OCI-LY7 (cell line): ENCODE measurements at regions of chr3 and their contacts with region 1.

Region 1: GRCh38 chr3:181700168-181701087 is 11.3 kb upstream of the SOX2 start:
- DNase-seq: peak; percentile 82
- H3K4me3 ChIP-seq: peak overlapping the region; percentile 55
- H3K27ac ChIP-seq: no peak overlapping the region
- H3K4me1 ChIP-seq: peaks cover 29% of the 10 kb centered on the region
- CTCF ChIP-seq: peak; percentile 97

Region 2: GRCh38 chr3:181103605-181104004 is 596.8 kb before region 1 on chr3:
- CTCF ChIA-PET with region 1: no interaction called
- POLR2A ChIA-PET with region 1: no interaction called
- intact Hi-C with region 1: loop called (anchors 5 kb)
- DNase-seq: peak; percentile 67
- H3K4me3 ChIP-seq: no peak overlapping the region
- H3K27ac ChIP-seq: no peak overlapping the region
- H3K4me1 ChIP-seq: no peaks in the 10 kb centered on the region
- CTCF ChIP-seq: peak; percentile 78

Region 3: DNA sequence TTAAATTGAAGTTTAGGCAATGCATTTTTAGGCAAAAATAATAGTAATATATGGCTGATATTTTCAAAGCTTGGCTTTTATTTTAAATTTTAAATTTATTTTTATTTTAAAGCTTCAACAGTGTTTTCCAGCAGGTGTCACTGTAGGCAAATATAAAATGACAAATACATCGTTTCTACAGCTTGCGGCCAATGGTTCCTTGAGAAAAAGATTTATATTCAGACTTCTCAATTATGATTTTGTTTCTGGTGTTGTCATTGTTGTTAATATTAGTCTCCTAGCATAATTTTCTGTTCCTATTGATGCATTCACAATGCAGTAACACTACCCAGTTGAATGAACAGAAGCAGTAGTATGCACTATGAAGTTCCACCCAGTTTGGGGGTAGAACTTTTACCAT is 490.2 kb before region 1 on chr3:
- CTCF ChIA-PET with region 1: no interaction called
- POLR2A ChIA-PET with region 1: no interaction called
- intact Hi-C with region 1: loop called (anchors 2 kb)
- DNase-seq: peak; percentile 31
- H3K4me3 ChIP-seq: no peak overlapping the region
- H3K27ac ChIP-seq: no peak overlapping the region
- H3K4me1 ChIP-seq: no peaks in the 10 kb centered on the region
- CTCF ChIP-seq: peak; percentile 76

Region 4: GRCh38 chr3:181326637-181327223 is 373.7 kb before region 1 on chr3:
- CTCF ChIA-PET with region 1: interaction called, 14 read pairs
- POLR2A ChIA-PET with region 1: no interaction called
- intact Hi-C with region 1: loop called (anchors 1 kb)
- DNase-seq: peak; percentile 57
- H3K4me3 ChIP-seq: no peak overlapping the region
- H3K27ac ChIP-seq: no peak overlapping the region
- H3K4me1 ChIP-seq: no peaks in the 10 kb centered on the region
- CTCF ChIP-seq: peak; percentile 94

Region 5: GRCh38 chr3:181486141-181486885 is 214.1 kb before region 1 on chr3:
- CTCF ChIA-PET with region 1: interaction called, 3 read pairs
- POLR2A ChIA-PET with region 1: interaction called, 3 read pairs
- intact Hi-C with region 1: loop called (anchors 5 kb)
- DNase-seq: peak; percentile 7
- H3K4me3 ChIP-seq: no peak overlapping the region
- H3K27ac ChIP-seq: peak overlapping the region; percentile 89
- H3K4me1 ChIP-seq: peaks cover 61% of the 10 kb centered on the region
- CTCF ChIP-seq: no peak

Region 6: GRCh38 chr3:181683563-181683962 is 16.9 kb before region 1 on chr3:
- CTCF ChIA-PET with region 1: no interaction called
- POLR2A ChIA-PET with region 1: no interaction called
- intact Hi-C with region 1: no loop called
- DNase-seq: no peak
- H3K4me3 ChIP-seq: no peak overlapping the region
- H3K27ac ChIP-seq: no peak overlapping the region
- H3K4me1 ChIP-seq: no peaks in the 10 kb centered on the region
- CTCF ChIP-seq: no peak

Region 7: GRCh38 chr3:181790561-181790960 is 90.1 kb after region 1 on chr3:
- CTCF ChIA-PET with region 1: no interaction called
- POLR2A ChIA-PET with region 1: no interaction called
- intact Hi-C with region 1: no loop called
- DNase-seq: no peak
- H3K4me3 ChIP-seq: no peak overlapping the region
- H3K27ac ChIP-seq: no peak overlapping the region
- H3K4me1 ChIP-seq: peaks cover 24% of the 10 kb centered on the region
- CTCF ChIP-seq: no peak

Region 8: DNA sequence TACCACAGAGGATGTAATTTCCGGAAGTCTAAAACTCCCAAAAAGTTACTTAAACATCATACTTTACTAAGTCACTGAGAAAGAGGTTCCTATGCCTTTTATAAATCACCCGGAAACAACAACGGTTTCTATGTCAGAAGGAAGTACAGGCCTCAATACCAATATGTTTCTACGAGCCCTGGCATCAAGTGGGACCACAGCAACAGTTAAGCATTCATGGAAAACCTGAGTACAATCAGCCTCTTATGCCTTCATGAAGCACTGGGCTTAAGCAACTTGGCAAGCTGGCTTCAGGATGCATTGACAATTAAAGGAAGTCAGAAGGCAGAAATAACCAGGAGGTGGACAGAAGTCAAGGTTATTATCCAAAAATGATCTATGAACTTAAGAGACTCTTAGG is 1533.5 kb after region 1 on chr3:
- CTCF ChIA-PET with region 1: no interaction called
- POLR2A ChIA-PET with region 1: no interaction called
- intact Hi-C with region 1: no loop called
- DNase-seq: no peak
- H3K4me3 ChIP-seq: no peak overlapping the region
- H3K27ac ChIP-seq: no peak overlapping the region
- H3K4me1 ChIP-seq: no peaks in the 10 kb centered on the region
- CTCF ChIP-seq: no peak